CD8-positive, alpha-beta T cell (primary cell): ENCODE measurements at regions of chr20 and their contacts with region 1.

Region 1: DNA sequence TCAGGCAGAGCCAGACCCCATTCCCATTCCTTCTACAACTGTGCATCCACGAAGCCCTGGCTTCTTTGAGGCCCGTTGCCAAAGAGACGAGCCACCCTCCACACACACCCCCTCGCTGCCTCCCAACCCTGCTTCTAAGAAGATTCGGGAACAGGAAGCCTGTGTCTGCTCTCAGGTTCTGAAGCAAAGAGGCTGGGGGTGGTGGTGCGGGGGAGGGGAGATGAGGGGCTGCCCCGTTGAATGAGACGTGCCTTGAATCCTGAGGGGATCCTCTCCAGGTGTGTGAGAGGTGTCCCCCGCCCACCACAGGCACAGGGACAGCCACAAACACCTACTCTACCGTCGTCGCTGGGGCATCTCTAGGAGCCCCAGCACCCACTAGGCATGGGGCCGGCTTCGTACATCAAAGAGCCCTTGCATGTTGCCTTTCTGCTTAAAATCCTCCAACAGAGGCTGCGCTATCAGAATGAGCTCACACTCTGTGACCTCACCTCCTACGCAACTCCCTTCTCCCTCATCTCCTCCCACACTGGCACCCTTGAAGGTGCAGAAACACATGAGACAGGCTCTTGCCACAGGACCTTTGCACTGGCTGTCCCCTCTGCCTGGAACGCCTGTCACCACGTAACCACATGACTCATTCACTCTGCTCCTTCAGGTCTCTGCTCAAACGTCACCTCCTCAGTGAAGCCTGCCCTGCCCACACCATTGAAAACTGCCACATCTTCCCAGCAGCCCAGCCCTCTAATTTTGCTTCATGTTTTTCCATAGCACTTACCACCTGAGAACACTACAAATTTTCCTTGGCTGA is 58.5 kb downstream of the PREX1 start:
- DNase-seq: peak; percentile 55 to 98 (median 85)
- ATAC-seq: peak; percentile 85
- H3K4me3 ChIP-seq: no peak overlapping the region
- H3K4me3 Mint-ChIP-seq: peak overlapping the region; percentile 71
- H3K27ac ChIP-seq: peak overlapping the region; percentile 62 to 89
- H3K27ac Mint-ChIP-seq: peak overlapping the region; percentile 92
- H3K4me1 ChIP-seq: peaks cover 80% of the 10 kb centered on the region
- H3K4me1 Mint-ChIP-seq: peaks cover 91% of the 10 kb centered on the region
- H3K27me3 ChIP-seq: no peaks in the 10 kb centered on the region
- H3K27me3 Mint-ChIP-seq: no peaks in the 10 kb centered on the region
- CTCF ChIP-seq: no peak

Region 2: GRCh38 chr20:48750947-48751635 is 18.2 kb before region 1 on chr20:
- CTCF ChIA-PET with region 1: interaction called, 6 read pairs
- POLR2A ChIA-PET with region 1: interaction called, 4 read pairs
- intact Hi-C with region 1: loop called (anchors 2 kb)
- DNase-seq: peak; percentile 16 to 81 (median 58)
- ATAC-seq: peak; percentile 78
- H3K4me3 ChIP-seq: peak overlapping the region; percentile 27 to 32
- H3K4me3 Mint-ChIP-seq: peak overlapping the region; percentile 56
- H3K27ac ChIP-seq: peak overlapping the region; percentile 12 to 68
- H3K27ac Mint-ChIP-seq: peak overlapping the region; percentile 88
- H3K4me1 ChIP-seq: peaks cover 67% of the 10 kb centered on the region
- H3K4me1 Mint-ChIP-seq: peaks cover 77% of the 10 kb centered on the region
- H3K27me3 ChIP-seq: no peaks in the 10 kb centered on the region
- H3K27me3 Mint-ChIP-seq: no peaks in the 10 kb centered on the region
- CTCF ChIP-seq: no peak